Heart right ventricle (tissue), 16 donors: ENCODE measurements at regions of chr13 and their contacts with region 1.

Region 1: GRCh38 chr13:77898097-77898496 is 20.5 kb downstream of the EDNRB start:
- DNase-seq: no peak
- ATAC-seq: peak in 6 of 8 donors; percentile 25 to 68 (median 52)
- H3K4me3 ChIP-seq: peak overlapping the region in 1 of 10 donors; percentile 0
- H3K27ac ChIP-seq: peak overlapping the region in 8 of 10 donors; percentile 77 to 90 (median 84)
- H3K4me1 ChIP-seq: peaks cover 0 to 53% (median 26%) of the 10 kb centered on the region in 9 donors
- H3K27me3 ChIP-seq: no peaks in the 10 kb centered on the region
- CTCF ChIP-seq: no peak

Region 2: GRCh38 chr13:77779552-77780272 is 118.4 kb before region 1 on chr13:
- intact Hi-C with region 1: loop called in 2 of 10 experiments (anchors 10 kb)
- DNase-seq: peak in 1 of 2 donors; percentile 59
- ATAC-seq: peak in 7 of 8 donors; percentile 41 to 84 (median 67)
- H3K4me3 ChIP-seq: no peak overlapping the region
- H3K27ac ChIP-seq: peak overlapping the region in 1 of 10 donors; percentile 34
- H3K4me1 ChIP-seq: peaks cover 0 to 9% (median 0%) of the 10 kb centered on the region in 9 donors
- H3K27me3 ChIP-seq: no peaks in the 10 kb centered on the region
- CTCF ChIP-seq: peak; percentile 53 to 85 (median 76)

Region 3: GRCh38 chr13:77985866-77986636 is 88.0 kb after region 1 on chr13:
- intact Hi-C with region 1: loop called in 2 of 10 experiments (anchors 5 to 10 kb)
- DNase-seq: peak in 1 of 2 donors; percentile 19
- ATAC-seq: peak; percentile 62 to 84 (median 70)
- H3K4me3 ChIP-seq: no peak overlapping the region
- H3K27ac ChIP-seq: peak overlapping the region in 1 of 10 donors; percentile 23
- H3K4me1 ChIP-seq: peaks cover 0 to 46% (median 9%) of the 10 kb centered on the region in 9 donors
- H3K27me3 ChIP-seq: no peaks in the 10 kb centered on the region
- CTCF ChIP-seq: no peak